OCI-LY7 (cell line): ENCODE measurements at regions of chr1 and their contacts with region 1.

Region 1: DNA sequence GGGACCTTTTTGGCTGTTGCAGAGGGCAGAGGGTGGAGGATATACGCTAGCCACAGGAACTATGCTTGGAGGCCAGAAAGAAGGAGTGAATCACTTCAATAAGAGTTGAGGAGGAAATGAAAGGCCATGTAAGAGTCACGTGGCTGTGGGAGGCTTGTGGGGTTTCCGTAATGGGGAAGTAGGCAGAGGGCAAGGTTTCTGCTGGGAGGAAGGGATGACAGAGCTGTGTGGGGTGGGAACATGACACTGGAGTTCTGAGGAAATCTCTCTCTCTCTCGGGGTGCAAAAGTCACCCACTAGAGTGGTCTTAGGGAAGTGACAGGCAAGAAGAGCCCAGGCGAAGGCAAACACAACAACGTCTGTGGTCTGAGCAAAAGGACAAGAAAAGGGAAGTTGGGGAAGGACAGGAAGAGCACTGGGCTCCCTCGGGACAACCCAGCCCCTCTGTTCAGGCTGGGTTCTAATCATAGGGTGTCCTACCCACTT is 3.9 kb upstream of the CD1C start:
- DNase-seq: peak; percentile 92
- H3K4me3 ChIP-seq: peak overlapping the region; percentile 61
- H3K27ac ChIP-seq: peak overlapping the region; percentile 89
- H3K4me1 ChIP-seq: peaks cover 78% of the 10 kb centered on the region
- CTCF ChIP-seq: no peak

Region 2: GRCh38 chr1:158248118-158248517 is 37.7 kb before region 1 on chr1:
- CTCF ChIA-PET with region 1: no interaction called
- POLR2A ChIA-PET with region 1: interaction called, 4 read pairs
- intact Hi-C with region 1: loop called (anchors 2 kb)
- DNase-seq: peak; percentile 81
- H3K4me3 ChIP-seq: peak overlapping the region; percentile 16
- H3K27ac ChIP-seq: no peak overlapping the region
- H3K4me1 ChIP-seq: peaks cover 25% of the 10 kb centered on the region
- CTCF ChIP-seq: no peak

Region 3: GRCh38 chr1:158931055-158931737 is 645.4 kb after region 1 on chr1 and contains the start of gene PYHIN1:
- CTCF ChIA-PET with region 1: no interaction called
- POLR2A ChIA-PET with region 1: no interaction called
- intact Hi-C with region 1: loop called (anchors 5 kb)
- DNase-seq: peak; percentile 79
- H3K4me3 ChIP-seq: peak within 1 kb of the TSS; percentile 76
- H3K27ac ChIP-seq: peak within 1 kb of the TSS; percentile 76
- H3K4me1 ChIP-seq: peaks cover 37% of the 10 kb centered on the region
- CTCF ChIP-seq: no peak
- total RNA-seq, gene PYHIN1: 42.5 and 44.6 TPM in 2 replicates

Region 4: GRCh38 chr1:158951956-158952355 is 666.2 kb after region 1 on chr1:
- CTCF ChIA-PET with region 1: no interaction called
- POLR2A ChIA-PET with region 1: no interaction called
- intact Hi-C with region 1: loop called (anchors 5 kb)
- DNase-seq: peak; percentile 97
- H3K4me3 ChIP-seq: peak overlapping the region; percentile 61
- H3K27ac ChIP-seq: peak overlapping the region; percentile 99
- H3K4me1 ChIP-seq: peaks cover 31% of the 10 kb centered on the region
- CTCF ChIP-seq: peak; percentile 52; the same call in 1 of the 2 replicates